Activated naive CD4-positive, alpha-beta T cell treated with anti-CD3 and anti-CD28 coated beads, Interleukin-2, amount 10 ng/mL, durations not matched to agents 7 days and 5 days (primary cell): ENCODE measurements at regions of chr2 and their contacts with region 1.

Region 1: DNA sequence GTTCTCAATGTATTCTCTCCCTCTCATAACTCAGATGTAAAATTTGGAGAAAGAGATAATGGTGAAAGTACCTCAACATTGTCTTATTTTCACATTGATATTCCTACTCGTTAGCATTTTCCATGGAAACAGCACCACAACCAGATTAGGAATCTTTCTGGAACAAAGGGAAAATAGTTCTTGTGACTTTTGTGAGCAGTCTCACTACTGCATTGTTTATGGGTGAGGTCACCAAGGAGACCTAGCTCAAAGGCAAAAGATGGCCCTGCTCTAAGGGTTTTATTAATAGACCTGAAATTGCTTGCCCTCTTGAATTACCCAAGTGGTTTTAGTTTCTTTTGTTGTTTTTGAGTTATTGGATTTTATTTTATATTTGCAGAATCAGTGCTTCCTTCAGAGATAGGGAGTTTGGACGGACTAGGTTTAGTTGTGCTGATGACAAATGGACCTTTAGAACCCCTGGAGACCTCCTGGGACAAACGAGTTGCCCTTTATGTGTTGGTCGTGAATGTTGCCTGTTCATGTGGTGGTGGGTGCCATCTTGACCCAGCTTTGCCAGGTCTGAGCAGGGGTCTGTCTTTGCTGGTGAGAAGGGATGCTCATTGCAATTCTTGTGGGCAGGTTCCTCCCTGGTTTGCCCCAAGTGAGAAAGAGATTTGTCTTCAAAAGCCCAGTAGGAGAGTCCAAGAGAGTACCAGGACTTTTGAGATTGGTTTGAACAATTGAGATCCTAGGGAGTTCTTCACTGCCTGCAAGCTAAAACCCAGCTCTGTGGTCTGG is 58.1 kb downstream of the INPP4A start:
- DNase-seq: no peak
- H3K4me3 Mint-ChIP-seq: no peak overlapping the region
- H3K27ac Mint-ChIP-seq: peak overlapping the region; percentile 25
- H3K4me1 Mint-ChIP-seq: peaks cover 71% of the 10 kb centered on the region
- H3K27me3 Mint-ChIP-seq: no peaks in the 10 kb centered on the region

Region 2: DNA sequence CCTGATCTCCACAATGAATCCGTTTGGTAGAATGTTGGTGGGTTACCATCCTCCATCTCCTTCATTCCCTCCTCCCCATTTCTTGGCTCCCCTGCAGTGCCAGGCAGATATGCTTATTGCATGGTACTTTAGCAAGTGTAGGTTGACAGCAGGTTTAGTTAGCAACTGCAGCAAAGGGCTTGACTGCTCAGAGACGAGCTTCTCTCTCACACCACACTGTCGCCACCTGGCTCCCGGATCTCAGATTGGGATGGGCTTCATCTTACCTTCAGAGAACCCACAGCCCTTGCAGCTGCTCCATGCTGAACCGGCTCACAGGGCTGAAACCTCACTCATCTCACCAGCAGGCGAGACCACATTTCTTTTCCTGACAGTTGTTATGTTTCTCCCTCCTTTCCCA is 326.9 kb before region 1 on chr2:
- CTCF ChIA-PET with region 1: no interaction called
- DNase-seq: no peak
- H3K4me3 Mint-ChIP-seq: no peak overlapping the region
- H3K27ac Mint-ChIP-seq: no peak overlapping the region
- H3K4me1 Mint-ChIP-seq: no peaks in the 10 kb centered on the region
- H3K27me3 Mint-ChIP-seq: peaks cover 73% of the 10 kb centered on the region

Region 3: DNA sequence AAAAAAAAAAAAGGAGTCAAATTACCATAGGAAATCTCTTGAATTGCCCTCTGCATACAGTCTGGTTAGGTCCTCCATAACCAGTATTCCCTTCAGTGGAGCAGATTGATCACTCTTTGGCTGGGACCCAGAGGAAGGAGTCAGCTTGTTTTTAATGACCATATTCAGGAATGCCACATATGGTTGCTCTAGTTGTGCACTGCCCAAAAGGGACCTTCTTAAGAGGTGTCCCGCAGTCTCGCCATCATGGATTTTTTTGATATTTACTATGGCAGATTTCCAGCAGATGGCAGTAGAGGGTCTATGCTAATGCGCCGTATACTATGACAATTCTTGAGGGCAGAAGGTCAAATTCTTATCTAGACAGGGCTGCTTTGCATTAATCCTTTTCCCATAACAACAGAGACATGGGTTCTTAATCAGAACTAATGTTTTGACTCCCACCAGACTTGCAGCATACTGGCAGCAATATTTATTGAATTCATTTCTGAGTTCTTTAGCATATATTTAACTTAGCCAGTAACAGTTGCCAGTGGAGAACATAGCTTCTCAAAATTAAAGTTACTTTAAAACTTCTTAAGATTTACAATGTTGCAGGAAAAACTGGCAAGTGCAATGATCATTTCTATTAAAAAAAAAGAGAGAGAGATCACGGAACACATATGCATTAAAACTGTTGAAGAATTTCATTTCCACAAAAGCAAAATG is 89.8 kb before region 1 on chr2:
- CTCF ChIA-PET with region 1: interaction called, 11 read pairs
- DNase-seq: peak; percentile 64
- H3K4me3 Mint-ChIP-seq: no peak overlapping the region
- H3K27ac Mint-ChIP-seq: no peak overlapping the region
- H3K4me1 Mint-ChIP-seq: peaks cover 11% of the 10 kb centered on the region
- H3K27me3 Mint-ChIP-seq: peaks cover 15% of the 10 kb centered on the region

Region 4: GRCh38 chr2:98426771-98427170 is 76.0 kb before region 1 on chr2:
- CTCF ChIA-PET with region 1: no interaction called
- DNase-seq: no peak
- H3K4me3 Mint-ChIP-seq: no peak overlapping the region
- H3K27ac Mint-ChIP-seq: no peak overlapping the region
- H3K4me1 Mint-ChIP-seq: no peaks in the 10 kb centered on the region
- H3K27me3 Mint-ChIP-seq: peaks cover 33% of the 10 kb centered on the region

Region 5: GRCh38 chr2:98479959-98480524 is 22.7 kb before region 1 on chr2:
- CTCF ChIA-PET with region 1: no interaction called
- DNase-seq: peak; percentile 68
- H3K4me3 Mint-ChIP-seq: peak overlapping the region; percentile 57
- H3K27ac Mint-ChIP-seq: peak overlapping the region; percentile 97
- H3K4me1 Mint-ChIP-seq: peaks cover 99% of the 10 kb centered on the region
- H3K27me3 Mint-ChIP-seq: no peaks in the 10 kb centered on the region